ENCODE measurements at regions of chrX and their contacts with region 1.

Region 1: GRCh38 chrX:73943693-73944562 is 360.1 kb upstream of the ZCCHC13 start:
- DNase-seq: peak; percentile 89
- H3K4me3 ChIP-seq: peak overlapping the region; percentile 87
- H3K27ac ChIP-seq: peak overlapping the region; percentile 69
- H3K4me1 ChIP-seq: peaks cover 6% of the 10 kb centered on the region
- CTCF ChIP-seq: no peak

Region 2: GRCh38 chrX:73562984-73563737 is 380.8 kb before region 1 on chrX and contains the start of gene CHIC1:
- CTCF ChIA-PET with region 1: no interaction called
- POLR2A ChIA-PET with region 1: no interaction called
- intact Hi-C with region 1: loop called (anchors 5 kb)
- DNase-seq: peak; percentile 82
- H3K4me3 ChIP-seq: peak within 1 kb of the TSS; percentile 84
- H3K27ac ChIP-seq: peak within 1 kb of the TSS; percentile 67
- H3K4me1 ChIP-seq: peaks cover 11% of the 10 kb centered on the region
- CTCF ChIP-seq: no peak
- total RNA-seq, gene CHIC1: 3.7 and 4.8 TPM in 2 replicates

Region 3: GRCh38 chrX:74009041-74009440 is 65.1 kb after region 1 on chrX:
- CTCF ChIA-PET with region 1: no interaction called
- POLR2A ChIA-PET with region 1: no interaction called
- intact Hi-C with region 1: loop called (anchors 5 kb)
- DNase-seq: no peak
- H3K4me3 ChIP-seq: no peak overlapping the region
- H3K27ac ChIP-seq: no peak overlapping the region
- H3K4me1 ChIP-seq: no peaks in the 10 kb centered on the region
- CTCF ChIP-seq: no peak

Region 4: DNA sequence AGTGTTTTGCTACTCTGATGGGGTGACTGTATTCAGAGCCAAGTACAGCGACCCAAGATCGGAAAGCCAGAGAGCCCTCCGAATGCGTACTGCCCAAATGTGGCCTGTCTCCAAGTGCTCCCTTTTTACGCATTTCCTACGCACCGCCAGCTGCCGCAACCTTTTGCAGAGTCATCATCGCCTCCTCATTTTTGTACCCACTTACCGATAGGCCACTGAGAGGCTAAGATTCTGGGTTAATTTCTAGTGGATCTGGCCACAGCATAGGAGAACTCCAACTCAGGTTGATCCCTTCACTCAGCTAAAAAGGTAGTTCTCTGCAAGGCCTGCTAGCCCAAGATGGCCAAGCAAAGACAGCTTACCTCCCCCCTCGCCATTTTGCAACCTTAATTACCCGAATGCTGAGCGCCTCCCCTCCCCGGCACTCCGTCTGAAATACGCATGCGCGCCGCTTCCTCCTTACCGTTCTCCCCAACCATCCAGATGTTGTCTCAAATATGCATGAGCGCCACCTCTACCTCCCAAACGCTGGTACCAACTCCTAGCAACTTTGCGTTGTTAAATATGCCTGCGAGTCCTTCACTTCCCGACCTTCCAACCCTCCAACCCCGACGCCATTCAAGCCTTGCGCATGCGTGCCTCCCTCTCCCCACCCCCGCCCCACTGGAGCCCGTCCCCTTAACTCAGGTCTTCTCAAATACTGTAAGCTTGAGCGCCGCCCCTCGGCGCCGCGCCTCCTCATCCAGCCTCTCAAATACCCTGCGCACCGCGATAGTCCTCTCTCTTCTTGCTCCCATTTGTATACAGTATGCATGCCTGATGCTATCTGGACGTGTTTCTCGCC is 348.3 kb after region 1 on chrX:
- CTCF ChIA-PET with region 1: no interaction called
- POLR2A ChIA-PET with region 1: no interaction called
- intact Hi-C with region 1: loop called (anchors 5 kb)
- DNase-seq: peak; percentile 86
- H3K4me3 ChIP-seq: peak overlapping the region; percentile 97
- H3K27ac ChIP-seq: peak overlapping the region; percentile 93
- H3K4me1 ChIP-seq: peaks cover 9% of the 10 kb centered on the region
- CTCF ChIP-seq: peak; percentile 62